ENCODE measurements at regions of chr16 and their contacts with region 1.

Region 1: GRCh38 chr16:35639233-35640205 is 2180.1 kb downstream of the TP53TG3F start:
- DNase-seq: no peak
- H3K4me3 ChIP-seq: no peak overlapping the region
- H3K27ac ChIP-seq: no peak overlapping the region
- H3K4me1 ChIP-seq: no peaks in the 10 kb centered on the region
- H3K27me3 ChIP-seq: no peaks in the 10 kb centered on the region
- CTCF ChIP-seq: no peak
- POLR2A ChIP-seq: no peak

Region 2: DNA sequence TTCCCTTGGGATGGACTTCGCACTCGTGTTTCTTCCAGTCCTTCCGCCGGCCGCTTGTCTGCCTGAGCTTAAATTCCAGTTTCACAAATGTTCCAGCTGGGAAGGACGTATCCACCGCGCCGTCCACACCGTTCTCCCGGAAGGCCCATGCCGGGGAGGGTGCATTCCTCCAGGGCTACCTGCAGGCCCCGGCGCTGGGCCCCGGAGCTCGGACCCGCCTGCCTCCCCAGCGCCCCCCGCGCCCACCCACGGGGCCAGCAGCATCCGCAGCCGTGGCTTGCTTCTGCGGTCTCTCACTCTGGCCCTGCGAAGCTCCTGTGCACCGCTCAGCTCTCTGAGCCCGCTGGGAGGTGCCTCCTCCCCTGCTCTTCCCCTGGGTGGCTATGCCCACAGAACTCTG is 96.0 kb before region 1 on chr16:
- intact Hi-C with region 1: no loop called
- DNase-seq: no peak
- H3K4me3 ChIP-seq: no peak overlapping the region
- H3K27ac ChIP-seq: no peak overlapping the region
- H3K4me1 ChIP-seq: no peaks in the 10 kb centered on the region
- H3K27me3 ChIP-seq: no peaks in the 10 kb centered on the region
- CTCF ChIP-seq: no peak
- POLR2A ChIP-seq: no peak

Region 3: GRCh38 chr16:35706901-35707300 is 67.4 kb after region 1 on chr16:
- intact Hi-C with region 1: loop called (anchors 10 kb)
- DNase-seq: no peak
- H3K4me3 ChIP-seq: no peak overlapping the region
- H3K27ac ChIP-seq: no peak overlapping the region
- H3K4me1 ChIP-seq: no peaks in the 10 kb centered on the region
- H3K27me3 ChIP-seq: no peaks in the 10 kb centered on the region
- CTCF ChIP-seq: no peak
- POLR2A ChIP-seq: no peak

Region 4: GRCh38 chr16:35733971-35734702 is 94.6 kb after region 1 on chr16:
- intact Hi-C with region 1: no loop called
- DNase-seq: no peak
- H3K4me3 ChIP-seq: no peak overlapping the region
- H3K27ac ChIP-seq: no peak overlapping the region
- H3K4me1 ChIP-seq: no peaks in the 10 kb centered on the region
- H3K27me3 ChIP-seq: no peaks in the 10 kb centered on the region
- CTCF ChIP-seq: no peak
- POLR2A ChIP-seq: no peak